GM10248 (cell line): ENCODE measurements at regions of chr2 and their contacts with region 1.

Region 1: GRCh38 chr2:43013821-43014345 is 212.5 kb downstream of the ZFP36L2 start:
- DNase-seq: no peak
- CTCF ChIP-seq: no peak

Region 2: DNA sequence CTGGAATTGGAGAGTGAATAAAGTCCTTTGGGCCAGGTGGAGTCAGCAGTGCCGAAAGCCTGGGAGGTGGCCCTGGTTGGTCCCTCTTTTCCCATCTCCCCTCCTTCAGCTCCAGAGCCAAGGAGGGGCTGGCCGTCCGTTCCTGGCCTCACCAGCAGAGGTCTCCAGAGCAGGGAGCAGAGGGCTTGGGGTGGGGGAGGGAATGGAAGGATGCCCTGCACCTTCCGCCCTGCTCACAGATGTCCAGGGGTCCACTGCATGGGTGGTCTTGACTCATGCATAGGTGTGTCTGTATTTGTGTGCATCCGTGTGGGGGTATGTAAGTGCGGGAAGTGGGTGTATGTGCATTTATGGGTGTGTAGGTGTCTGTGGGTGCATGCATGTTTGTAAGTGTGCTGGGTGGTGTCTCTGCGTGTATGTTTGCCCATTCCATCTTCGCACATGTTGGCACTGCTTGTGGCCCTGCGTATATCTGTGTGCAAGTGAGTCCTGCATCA is 10.7 kb after region 1 on chr2:
- CTCF ChIA-PET with region 1: interaction called, 10 read pairs
- POLR2A ChIA-PET with region 1: no interaction called
- DNase-seq: peak; percentile 59
- CTCF ChIP-seq: peak; percentile 76

Region 3: GRCh38 chr2:43041661-43042360 is 27.9 kb after region 1 on chr2:
- CTCF ChIA-PET with region 1: no interaction called
- POLR2A ChIA-PET with region 1: no interaction called
- DNase-seq: no peak
- CTCF ChIP-seq: no peak